ENCODE measurements at regions of chr1 and their contacts with region 1.

Region 1: DNA sequence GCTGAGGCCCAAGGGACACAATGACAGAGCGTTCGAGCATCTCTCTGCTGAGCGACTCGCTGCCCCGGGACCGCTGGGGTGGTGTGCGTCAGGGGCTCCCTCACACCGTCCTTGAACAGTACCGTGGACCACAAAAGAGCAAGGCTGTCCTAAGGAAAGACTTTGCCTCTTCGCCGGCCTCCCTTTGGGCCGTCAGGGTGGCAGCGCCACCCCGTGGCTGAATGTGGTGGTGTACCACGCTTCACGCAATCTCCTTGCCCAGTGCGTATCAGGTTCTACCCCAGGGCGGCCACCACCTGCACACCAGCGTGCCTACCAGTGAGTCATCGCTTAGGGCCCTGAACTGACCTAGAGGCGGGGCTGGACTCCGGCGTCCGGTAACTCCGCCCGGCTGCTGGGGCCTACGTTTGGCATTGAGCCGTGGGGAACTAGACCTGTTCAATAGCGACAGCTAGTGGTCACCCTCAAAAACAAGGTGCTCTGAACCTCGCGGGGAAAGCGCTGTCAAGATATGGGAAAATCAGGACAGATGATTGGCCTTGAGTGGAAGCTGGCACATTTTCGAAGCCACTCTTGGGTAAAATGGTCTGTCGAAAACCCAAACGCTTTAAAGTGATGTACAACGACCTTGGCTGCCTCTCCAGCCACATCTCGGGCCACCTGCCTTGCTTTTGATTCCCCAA is 8.1 kb upstream of the TRAF3IP3 start:
- DNase-seq: peak; percentile 81 to 96
- ATAC-seq: peak; percentile 91 to 98
- H3K4me3 ChIP-seq: peak overlapping the region in 3 of 4 donors; percentile 20 to 39 (median 32)
- H3K27ac ChIP-seq: peak overlapping the region; percentile 31 to 65 (median 48)
- H3K4me1 ChIP-seq: no peaks in the 10 kb centered on the region
- H3K27me3 ChIP-seq: no peaks in the 10 kb centered on the region
- CTCF ChIP-seq: peak; percentile 81 to 95 (median 81)
- POLR2A ChIP-seq: no peak

Region 2: GRCh38 chr1:209565759-209566678 is 181.7 kb before region 1 on chr1:
- in situ Hi-C with region 1: loop called in 1 of 4 experiments (anchors 5 kb)
- intact Hi-C with region 1: no loop called
- DNase-seq: peak; percentile 26 to 58
- ATAC-seq: peak; percentile 65 to 73
- H3K4me3 ChIP-seq: no peak overlapping the region
- H3K27ac ChIP-seq: no peak overlapping the region
- H3K4me1 ChIP-seq: no peaks in the 10 kb centered on the region
- H3K27me3 ChIP-seq: peaks cover 0 to 3% (median 0%) of the 10 kb centered on the region in 3 donors
- CTCF ChIP-seq: peak; percentile 21 to 67 (median 48)
- POLR2A ChIP-seq: no peak

Region 3: DNA sequence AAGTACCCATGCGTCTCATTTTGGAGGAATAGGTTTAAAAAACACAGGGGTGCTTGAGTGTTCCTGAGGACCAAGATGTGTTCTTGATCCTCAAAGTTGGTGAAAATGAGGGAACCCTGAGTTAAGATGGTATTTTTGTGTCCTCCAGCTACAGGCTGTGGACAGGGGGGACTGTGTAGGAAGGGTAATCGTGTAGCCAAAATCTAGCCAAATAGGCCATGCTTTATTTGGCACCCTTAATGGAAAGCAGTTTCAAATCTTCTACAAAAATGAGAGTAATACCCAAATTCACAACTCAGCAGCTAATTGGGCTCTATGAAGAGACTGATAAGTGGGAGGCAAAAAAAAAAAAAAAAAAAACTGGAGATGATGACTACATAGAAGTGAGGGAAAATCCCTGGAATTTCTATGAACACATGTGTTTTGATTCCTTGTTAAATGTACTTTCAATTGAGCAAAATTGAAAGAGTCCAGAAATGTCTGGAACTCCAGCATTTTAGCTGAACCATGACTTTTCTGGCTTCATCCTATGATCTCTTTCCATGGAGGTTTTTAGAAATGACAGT is 42.6 kb before region 1 on chr1:
- in situ Hi-C with region 1: no loop called
- intact Hi-C with region 1: loop called (anchors 5 kb)
- DNase-seq: no peak
- ATAC-seq: no peak
- H3K4me3 ChIP-seq: peak overlapping the region in 1 of 4 donors; percentile 21
- H3K27ac ChIP-seq: peak overlapping the region; percentile 37 to 58 (median 42)
- H3K4me1 ChIP-seq: no peaks in the 10 kb centered on the region
- H3K27me3 ChIP-seq: no peaks in the 10 kb centered on the region
- CTCF ChIP-seq: no peak
- POLR2A ChIP-seq: no peak

Region 4: GRCh38 chr1:211684791-211685190 is 1937.1 kb after region 1 on chr1:
- in situ Hi-C with region 1: no loop called
- intact Hi-C with region 1: no loop called
- DNase-seq: no peak
- ATAC-seq: no peak
- H3K4me3 ChIP-seq: no peak overlapping the region
- H3K27ac ChIP-seq: no peak overlapping the region
- H3K4me1 ChIP-seq: no peaks in the 10 kb centered on the region
- H3K27me3 ChIP-seq: no peaks in the 10 kb centered on the region
- CTCF ChIP-seq: no peak
- POLR2A ChIP-seq: no peak